T-cell (primary cell): ENCODE measurements at regions of chr1 and their contacts with region 1.

Region 1: GRCh38 chr1:211037095-211037494 is 96.9 kb downstream of the KCNH1 start:
- DNase-seq: no peak
- ATAC-seq: no peak
- H3K4me3 ChIP-seq: no peak overlapping the region
- H3K4me3 Mint-ChIP-seq: no peak overlapping the region
- H3K27ac ChIP-seq: no peak overlapping the region
- H3K27ac Mint-ChIP-seq: no peak overlapping the region
- H3K4me1 ChIP-seq: no peaks in the 10 kb centered on the region
- H3K4me1 Mint-ChIP-seq: no peaks in the 10 kb centered on the region
- H3K27me3 ChIP-seq: peaks cover 0 to 5% of the 10 kb centered on the region in 2 experiments
- H3K27me3 Mint-ChIP-seq: peaks cover 4 to 11% of the 10 kb centered on the region in 2 donors

Region 2: DNA sequence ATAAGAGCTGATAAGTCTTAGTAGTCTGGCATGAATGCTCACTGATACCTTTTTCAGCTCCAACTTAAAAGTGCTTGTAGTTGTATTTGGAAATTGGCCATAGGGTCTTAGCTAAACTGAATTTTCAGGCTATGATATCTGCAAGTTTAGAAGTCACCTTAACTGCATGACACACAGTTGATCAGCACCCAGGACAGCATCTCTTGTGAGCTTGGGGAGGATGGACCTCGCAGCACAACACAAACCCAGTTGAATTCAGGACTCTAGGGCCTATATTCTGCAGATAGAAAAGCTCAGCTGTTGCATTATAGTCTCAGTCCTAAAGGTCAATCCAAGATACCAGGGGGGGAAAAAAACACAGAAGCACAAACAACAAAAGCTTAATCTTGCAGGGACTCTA is 297.5 kb before region 1 on chr1:
- CTCF ChIA-PET with region 1: no interaction called
- POLR2A ChIA-PET with region 1: interaction called in 1 of 2 experiments, 10 read pairs
- DNase-seq: no peak
- ATAC-seq: no peak
- H3K4me3 ChIP-seq: no peak overlapping the region
- H3K4me3 Mint-ChIP-seq: no peak overlapping the region
- H3K27ac ChIP-seq: no peak overlapping the region
- H3K27ac Mint-ChIP-seq: no peak overlapping the region
- H3K4me1 ChIP-seq: no peaks in the 10 kb centered on the region
- H3K4me1 Mint-ChIP-seq: no peaks in the 10 kb centered on the region
- H3K27me3 ChIP-seq: peaks cover 0 to 8% of the 10 kb centered on the region in 2 experiments
- H3K27me3 Mint-ChIP-seq: peaks cover 4 to 26% of the 10 kb centered on the region in 2 donors